Naive thymus-derived CD8-positive, alpha-beta T cell (primary cell): ENCODE measurements at regions of chr2 and their contacts with region 1.

Region 1: GRCh38 chr2:229921892-229922445 is at the start of gene TRIP12:
- DNase-seq: peak; percentile 77 to 100 (median 89)
- ATAC-seq: peak; percentile 73 to 74
- H3K4me3 Mint-ChIP-seq: peak within 1 kb of the TSS; percentile 90 to 100 (median 98)
- H3K27ac Mint-ChIP-seq: peak within 1 kb of the TSS; percentile 96 to 99 (median 99)
- H3K4me1 Mint-ChIP-seq: peaks cover 30 to 51% (median 38%) of the 10 kb centered on the region in 4 donors
- H3K27me3 Mint-ChIP-seq: peaks cover 0 to 5% (median 0%) of the 10 kb centered on the region in 5 donors
- polyA plus RNA-seq, gene TRIP12: 32.2 to 45.2 (median 41.2) TPM

Region 2: DNA sequence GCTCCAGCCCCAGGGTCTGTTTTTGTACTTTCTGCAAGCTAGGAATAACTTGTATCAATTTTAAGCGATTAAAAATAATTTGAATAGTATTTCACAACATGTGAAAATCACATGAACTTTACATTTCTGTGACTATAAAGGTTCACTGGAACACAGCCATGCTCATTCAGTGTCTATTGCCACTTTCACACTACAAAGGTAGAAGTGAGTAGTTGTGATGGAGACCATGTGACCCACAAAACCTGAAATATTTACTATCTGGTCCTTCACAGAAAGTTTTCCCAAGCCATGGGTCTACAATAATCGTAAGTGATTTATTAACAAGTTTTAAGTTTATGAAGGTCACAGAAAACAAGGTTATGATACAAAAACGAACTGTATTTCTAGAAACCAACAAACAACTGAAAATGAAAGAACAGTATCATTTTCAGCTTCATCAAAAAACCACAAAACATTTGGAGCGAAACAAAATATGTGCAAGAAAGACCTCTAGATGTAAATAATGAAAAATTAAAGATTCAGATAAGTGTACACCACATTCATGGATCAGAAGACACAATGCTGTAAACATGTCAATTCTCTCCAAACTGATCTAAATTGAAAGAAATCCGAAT is 138.8 kb before region 1 on chr2:
- POLR2A ChIA-PET with region 1: interaction called, 10 read pairs
- DNase-seq: no peak
- ATAC-seq: no peak
- H3K4me3 Mint-ChIP-seq: no peak overlapping the region
- H3K27ac Mint-ChIP-seq: peak overlapping the region in 4 of 10 donors; percentile 11 to 32 (median 22)
- H3K4me1 Mint-ChIP-seq: peaks cover 9 to 19% (median 13%) of the 10 kb centered on the region in 4 donors
- H3K27me3 Mint-ChIP-seq: no peaks in the 10 kb centered on the region

Region 3: GRCh38 chr2:229852565-229852964 is 69.4 kb before region 1 on chr2:
- POLR2A ChIA-PET with region 1: interaction called, 12 read pairs
- DNase-seq: peak; percentile 8 to 71 (median 38)
- ATAC-seq: peak; percentile 95 to 96
- H3K4me3 Mint-ChIP-seq: peak overlapping the region in 8 of 10 donors; percentile 12 to 64 (median 44)
- H3K27ac Mint-ChIP-seq: peak overlapping the region; percentile 63 to 95 (median 85)
- H3K4me1 Mint-ChIP-seq: peaks cover 29 to 67% (median 66%) of the 10 kb centered on the region in 4 donors
- H3K27me3 Mint-ChIP-seq: no peaks in the 10 kb centered on the region

Region 4: GRCh38 chr2:229910832-229911412 is 11.0 kb before region 1 on chr2:
- POLR2A ChIA-PET with region 1: interaction called, 19 read pairs
- DNase-seq: peak in 2 of 10 donors; percentile 25 to 31
- ATAC-seq: peak; percentile 70 to 79
- H3K4me3 Mint-ChIP-seq: peak overlapping the region in 6 of 10 donors; percentile 16 to 37 (median 30)
- H3K27ac Mint-ChIP-seq: peak overlapping the region in 9 of 10 donors; percentile 14 to 88 (median 73)
- H3K4me1 Mint-ChIP-seq: peaks cover 29 to 78% (median 50%) of the 10 kb centered on the region in 4 donors
- H3K27me3 Mint-ChIP-seq: no peaks in the 10 kb centered on the region

Region 5: GRCh38 chr2:229974266-229974665 is 52.3 kb after region 1 on chr2:
- POLR2A ChIA-PET with region 1: no interaction called
- DNase-seq: no peak
- ATAC-seq: no peak
- H3K4me3 Mint-ChIP-seq: no peak overlapping the region
- H3K27ac Mint-ChIP-seq: peak overlapping the region in 1 of 10 donors; percentile 47
- H3K4me1 Mint-ChIP-seq: no peaks in the 10 kb centered on the region
- H3K27me3 Mint-ChIP-seq: no peaks in the 10 kb centered on the region